ENCODE measurements at regions of chr3 and their contacts with region 1.

Region 1: GRCh38 chr3:66047311-66048050 is 8.8 kb upstream of the MAGI1 start:
- DNase-seq: no peak
- ATAC-seq: peak in 1 of 4 donors; percentile 59
- H3K4me3 ChIP-seq: no peak overlapping the region
- H3K27ac ChIP-seq: no peak overlapping the region
- H3K4me1 ChIP-seq: peaks cover 3% of the 10 kb centered on the region
- H3K27me3 ChIP-seq: no peaks in the 10 kb centered on the region
- CTCF ChIP-seq: no peak

Region 2: DNA sequence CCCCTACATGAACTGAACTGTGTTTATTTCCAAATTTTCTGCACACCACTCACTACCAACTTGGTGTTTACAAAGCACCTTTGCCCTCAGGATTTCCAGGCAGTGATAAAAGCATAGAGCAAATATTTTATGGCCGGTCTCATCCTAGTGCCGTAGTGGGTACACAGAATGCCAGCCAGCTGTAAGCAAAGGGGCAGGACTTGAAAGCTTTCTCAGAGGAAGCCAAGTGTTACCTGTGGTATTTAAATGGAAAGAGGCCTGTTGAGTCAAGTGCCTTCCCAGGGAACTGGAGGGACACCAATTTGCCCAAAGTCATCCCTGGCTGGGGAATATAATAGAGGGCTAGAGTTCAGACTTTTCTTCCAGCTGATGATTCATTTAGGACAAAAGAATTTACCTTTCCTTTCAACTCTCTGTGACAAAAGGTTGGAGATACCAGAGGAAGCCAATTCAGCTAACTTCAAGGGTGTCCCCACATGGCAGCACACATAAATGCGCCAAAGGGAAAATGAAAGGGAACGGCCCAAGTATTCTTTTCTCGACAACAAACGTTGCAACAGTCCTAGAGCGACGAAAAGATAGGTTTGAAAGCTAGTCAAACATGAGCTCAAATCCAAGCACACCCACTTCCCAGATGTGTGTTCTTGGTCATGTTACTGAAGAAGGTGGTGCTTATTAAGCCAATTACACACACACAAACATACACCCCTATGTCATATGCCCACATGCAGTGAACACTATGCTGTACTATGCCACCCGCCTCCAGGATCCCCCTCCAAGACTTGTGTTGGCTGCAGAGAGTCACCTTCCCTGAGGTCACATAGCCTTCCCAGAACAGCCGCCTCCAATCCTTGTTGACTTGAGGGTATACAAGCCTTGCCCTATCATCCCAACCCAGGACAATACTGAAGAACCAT is 36.5 kb before region 1 on chr3:
- intact Hi-C with region 1: no loop called
- DNase-seq: no peak
- ATAC-seq: no peak
- H3K4me3 ChIP-seq: no peak overlapping the region
- H3K27ac ChIP-seq: no peak overlapping the region
- H3K4me1 ChIP-seq: peaks cover 4% of the 10 kb centered on the region
- H3K27me3 ChIP-seq: no peaks in the 10 kb centered on the region
- CTCF ChIP-seq: no peak

Region 3: DNA sequence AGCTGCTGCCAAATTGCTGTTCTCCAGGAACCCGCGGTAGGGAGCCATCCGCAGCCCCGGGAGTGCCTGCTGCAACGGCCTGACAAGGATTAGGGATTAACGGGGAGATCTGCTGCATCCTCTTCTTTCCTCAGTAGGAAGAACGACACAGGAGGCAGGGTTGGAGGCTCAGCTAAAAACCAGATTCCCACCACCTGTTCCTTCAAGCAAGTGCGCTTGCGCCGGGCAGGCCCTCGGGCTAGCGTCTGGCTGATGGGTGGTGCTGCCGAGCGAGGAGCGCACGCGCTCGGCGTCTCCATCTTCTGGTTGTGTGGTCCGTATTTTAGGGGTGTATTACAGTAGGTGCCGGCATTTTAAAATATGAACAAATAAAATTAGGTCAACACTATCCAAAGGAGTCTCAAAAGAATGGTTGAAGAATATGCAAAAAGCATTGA is 147.9 kb after region 1 on chr3:
- intact Hi-C with region 1: loop called in 1 of 2 experiments (anchors 10 kb)
- DNase-seq: peak; percentile 44 to 72
- ATAC-seq: peak; percentile 61 to 85 (median 77)
- H3K4me3 ChIP-seq: peak overlapping the region; percentile 51
- H3K27ac ChIP-seq: no peak overlapping the region
- H3K4me1 ChIP-seq: peaks cover 5% of the 10 kb centered on the region
- H3K27me3 ChIP-seq: no peaks in the 10 kb centered on the region
- CTCF ChIP-seq: no peak

Region 4: DNA sequence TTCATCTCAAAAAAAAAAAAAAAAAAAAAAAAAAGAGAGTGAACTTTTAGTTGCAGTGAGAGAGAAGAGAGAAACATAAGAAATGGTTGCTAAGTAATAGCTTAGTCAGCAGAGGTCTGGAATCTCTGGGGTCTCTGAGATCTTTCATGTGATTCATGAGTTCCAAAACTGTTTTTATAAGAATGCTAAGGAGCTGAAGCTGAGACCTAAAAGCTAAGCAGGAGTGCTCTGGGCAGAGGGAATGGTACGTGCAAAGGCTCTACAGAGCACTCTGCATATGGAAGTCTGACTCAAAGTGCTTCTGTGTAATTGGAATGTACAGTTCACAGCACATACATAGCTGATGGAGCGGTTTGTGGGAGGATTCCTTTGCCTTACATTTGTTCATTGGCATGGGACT is 519.6 kb after region 1 on chr3:
- intact Hi-C with region 1: no loop called
- DNase-seq: no peak
- ATAC-seq: no peak
- H3K4me3 ChIP-seq: no peak overlapping the region
- H3K27ac ChIP-seq: no peak overlapping the region
- H3K4me1 ChIP-seq: no peaks in the 10 kb centered on the region
- H3K27me3 ChIP-seq: no peaks in the 10 kb centered on the region
- CTCF ChIP-seq: no peak